Activated CD4-positive, alpha-beta T cell treated with anti-CD3 and anti-CD28 coated beads, Interleukin-2, amount 10 ng/mL, durations not matched to agents 24 days and 14 days (primary cell): ENCODE measurements at regions of chr14 and their contacts with region 1.

Region 1: DNA sequence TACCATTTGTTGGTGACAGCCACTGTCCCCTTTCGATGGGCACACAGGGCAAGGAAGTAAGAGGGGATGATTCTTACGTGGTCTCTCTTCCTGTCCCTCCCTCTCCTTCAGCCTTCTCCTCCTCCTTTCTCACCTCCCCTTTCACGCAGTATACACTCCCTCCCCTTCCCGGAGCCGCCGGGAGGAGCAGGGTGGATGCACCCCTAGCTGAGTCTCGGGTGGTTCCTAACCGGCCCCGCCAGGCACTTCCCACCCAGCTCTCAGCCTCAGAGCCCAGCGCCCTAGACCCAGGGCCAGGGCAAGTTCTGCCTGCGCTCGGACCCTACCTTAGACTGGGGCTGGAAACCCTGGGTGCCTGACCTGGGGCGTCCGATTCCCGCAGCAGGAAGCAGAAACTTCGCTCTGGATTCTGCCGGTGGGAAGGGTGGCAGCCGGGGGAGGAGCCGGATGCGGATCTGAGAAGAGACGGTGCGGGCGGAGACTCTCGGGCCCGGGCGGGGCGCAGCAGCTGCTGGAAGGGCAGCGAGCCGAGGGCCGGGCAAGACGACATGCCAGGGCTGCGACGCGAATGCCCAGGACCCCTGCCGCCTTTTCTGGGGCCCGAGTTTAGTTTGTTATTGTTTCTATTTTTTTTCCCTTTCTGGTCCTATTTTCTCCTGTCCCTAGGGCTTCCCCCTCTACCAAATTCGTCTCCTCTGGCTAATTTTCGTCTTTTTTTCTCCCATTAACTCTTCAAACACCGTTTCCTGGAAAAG is at the start of gene TEP1:
- DNase-seq: peak; percentile 93
- H3K4me3 Mint-ChIP-seq: peak within 1 kb of the TSS; percentile 97
- H3K27ac Mint-ChIP-seq: peak within 1 kb of the TSS; percentile 96
- H3K4me1 Mint-ChIP-seq: peaks cover 43% of the 10 kb centered on the region
- H3K27me3 Mint-ChIP-seq: no peaks in the 10 kb centered on the region
- total RNA-seq, gene TEP1: 34.6 and 35.8 TPM in 2 replicates

Region 2: GRCh38 chr14:20327005-20327869 is 86.0 kb before region 1 on chr14:
- intact Hi-C with region 1: loop called (anchors 1 kb)
- DNase-seq: peak; percentile 83
- H3K4me3 Mint-ChIP-seq: peak overlapping the region; percentile 56
- H3K27ac Mint-ChIP-seq: peak overlapping the region; percentile 31
- H3K4me1 Mint-ChIP-seq: peaks cover 31% of the 10 kb centered on the region
- H3K27me3 Mint-ChIP-seq: no peaks in the 10 kb centered on the region

Region 3: DNA sequence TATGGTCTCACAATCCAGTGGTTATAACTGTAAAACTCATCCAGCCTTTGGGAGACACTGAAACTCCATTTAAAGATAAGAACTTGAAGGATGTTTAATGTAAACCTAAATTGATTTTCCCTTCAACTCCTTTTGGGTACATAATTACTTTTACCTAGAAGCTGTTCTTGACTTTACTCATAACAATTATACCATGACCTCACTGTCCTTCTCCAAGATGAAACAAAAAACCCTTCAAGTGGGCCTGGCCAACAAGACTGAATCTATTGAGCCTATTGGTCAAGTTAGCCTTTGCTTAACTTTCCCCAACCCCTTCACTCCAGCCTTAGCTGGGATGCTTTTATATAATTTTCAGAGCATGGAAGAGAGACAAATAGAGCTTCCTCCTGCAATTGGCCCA is 47.3 kb before region 1 on chr14:
- intact Hi-C with region 1: loop called (anchors 2 kb)
- DNase-seq: no peak
- H3K4me3 Mint-ChIP-seq: no peak overlapping the region
- H3K27ac Mint-ChIP-seq: no peak overlapping the region
- H3K4me1 Mint-ChIP-seq: peaks cover 5% of the 10 kb centered on the region
- H3K27me3 Mint-ChIP-seq: no peaks in the 10 kb centered on the region

Region 4: DNA sequence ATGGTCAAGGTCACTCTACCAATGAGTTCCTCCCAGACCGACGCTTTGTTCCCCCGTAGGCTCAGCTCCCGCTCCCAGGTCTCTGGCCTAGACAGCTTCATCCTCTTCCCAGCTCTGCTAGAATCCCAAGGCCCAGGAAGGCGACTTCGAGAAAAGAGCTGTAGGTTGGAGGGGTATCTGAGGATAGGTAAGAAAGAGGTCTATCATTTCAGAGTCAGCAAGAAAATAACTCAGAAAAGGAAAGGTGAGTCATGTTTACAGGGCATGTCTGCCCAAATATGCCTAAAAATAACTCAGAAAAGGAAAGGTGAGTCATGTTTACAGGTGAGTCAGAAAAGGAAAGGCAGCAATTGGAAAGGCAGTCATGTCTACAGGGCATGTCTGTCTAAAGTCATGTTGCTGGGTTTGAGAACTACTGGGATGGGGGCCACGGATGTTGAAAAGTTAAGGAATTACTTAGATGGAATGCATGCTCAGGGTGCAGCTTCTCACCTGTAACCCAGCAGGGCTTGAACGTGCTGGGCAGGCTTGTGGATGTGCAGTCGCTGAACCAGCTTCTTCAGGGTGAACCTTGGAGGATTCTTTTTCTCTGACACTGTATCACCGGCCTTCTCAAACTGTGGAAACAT is 12.1 kb before region 1 on chr14:
- intact Hi-C with region 1: loop called (anchors 1 kb)
- DNase-seq: no peak
- H3K4me3 Mint-ChIP-seq: peak overlapping the region; percentile 68
- H3K27ac Mint-ChIP-seq: peak overlapping the region; percentile 96
- H3K4me1 Mint-ChIP-seq: peaks cover 25% of the 10 kb centered on the region
- H3K27me3 Mint-ChIP-seq: no peaks in the 10 kb centered on the region

Region 5: GRCh38 chr14:20427231-20428009 is 14.2 kb after region 1 on chr14:
- intact Hi-C with region 1: loop called (anchors 2 kb)
- DNase-seq: no peak
- H3K4me3 Mint-ChIP-seq: peak overlapping the region; percentile 52
- H3K27ac Mint-ChIP-seq: peak overlapping the region; percentile 80
- H3K4me1 Mint-ChIP-seq: peaks cover 22% of the 10 kb centered on the region
- H3K27me3 Mint-ChIP-seq: no peaks in the 10 kb centered on the region

Region 6: DNA sequence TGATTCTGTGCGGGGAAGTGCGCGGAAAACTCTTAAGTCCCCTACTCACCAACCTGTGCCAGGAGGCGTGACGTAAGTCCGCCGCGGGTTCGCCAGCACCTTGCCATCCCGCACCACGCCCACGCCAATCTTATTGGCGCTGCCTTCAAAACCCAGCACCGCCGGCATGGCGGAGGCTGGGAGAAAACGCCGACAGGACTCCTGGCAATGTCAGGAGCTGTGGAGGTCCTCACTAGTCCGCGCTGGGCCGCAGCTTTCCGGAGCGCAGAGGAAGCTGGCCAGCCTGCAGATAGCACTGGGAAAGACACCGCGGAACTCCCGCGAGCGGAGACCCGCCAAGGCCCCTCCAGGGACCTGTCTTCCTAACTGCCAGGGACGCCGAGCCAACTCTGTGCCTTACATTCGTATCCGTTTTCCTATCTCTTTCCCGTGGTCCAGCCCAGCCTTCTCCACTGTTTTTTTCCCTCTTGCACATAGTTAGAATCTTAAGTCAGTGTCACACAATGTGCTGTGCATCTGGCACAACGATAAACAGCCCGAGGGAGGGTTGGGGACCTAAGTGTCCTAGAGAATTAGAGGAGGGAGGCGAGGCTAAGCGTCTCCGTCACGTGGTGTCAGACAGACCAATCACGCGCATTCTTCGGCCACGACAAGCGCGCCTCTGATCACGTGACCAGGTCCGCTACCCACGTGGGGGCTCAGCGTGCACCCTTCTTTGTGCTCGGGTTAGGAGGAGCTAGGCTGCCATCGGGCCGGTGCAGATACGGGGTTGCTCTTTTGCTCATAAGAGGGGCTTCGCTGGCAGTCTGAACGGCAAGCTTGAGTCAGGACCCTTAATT is 41.5 kb after region 1 on chr14 and contains the starts of genes APEX1 and OSGEP:
- intact Hi-C with region 1: loop called (anchors 1 kb)
- DNase-seq: peak; percentile 99
- H3K4me3 Mint-ChIP-seq: peak within 1 kb of the TSS; percentile 59
- H3K27ac Mint-ChIP-seq: no peak within 1 kb of the TSS
- H3K4me1 Mint-ChIP-seq: peaks cover 20% of the 10 kb centered on the region
- H3K27me3 Mint-ChIP-seq: no peaks in the 10 kb centered on the region
- total RNA-seq, gene APEX1: 239 and 242 TPM in 2 replicates
- total RNA-seq, gene OSGEP: 69.8 and 76.9 TPM in 2 replicates

Region 7: DNA sequence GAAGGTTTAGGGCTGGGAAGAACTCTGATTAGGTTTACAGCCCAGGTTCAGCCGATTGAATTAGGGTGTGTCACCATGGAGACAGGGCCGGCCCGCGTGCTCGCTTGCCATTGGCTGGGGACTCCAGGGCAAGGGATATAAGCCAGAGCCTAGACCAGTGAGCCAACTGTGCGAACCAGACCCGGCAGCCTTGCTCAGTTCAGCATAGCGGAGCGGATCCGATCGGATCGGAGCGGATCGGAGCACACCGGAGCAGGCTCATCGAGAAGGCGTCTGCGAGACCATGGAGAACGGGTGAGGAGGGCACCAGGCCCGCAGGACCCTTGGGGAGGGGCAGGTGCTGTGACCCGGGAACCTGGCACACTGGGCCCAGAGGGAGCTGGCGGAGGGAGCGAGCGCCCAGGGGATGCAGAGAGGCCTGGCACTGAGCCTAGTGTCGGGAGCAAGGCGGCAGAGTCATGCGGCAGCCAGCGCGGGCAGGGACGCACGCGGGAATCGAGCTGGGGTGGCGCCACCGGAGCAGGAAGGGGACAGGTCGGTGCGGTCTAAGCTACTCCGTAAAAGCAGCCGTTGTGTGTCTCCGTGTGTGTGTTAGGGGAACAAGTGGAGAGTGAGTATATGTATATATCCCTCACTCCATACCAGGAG is 56.1 kb after region 1 on chr14 and contains the start of gene PNP:
- intact Hi-C with region 1: no loop called
- DNase-seq: peak; percentile 96
- H3K4me3 Mint-ChIP-seq: peak within 1 kb of the TSS; percentile 95
- H3K27ac Mint-ChIP-seq: peak within 1 kb of the TSS; percentile 100
- H3K4me1 Mint-ChIP-seq: peaks cover 36% of the 10 kb centered on the region
- H3K27me3 Mint-ChIP-seq: peaks cover 2% of the 10 kb centered on the region
- total RNA-seq, gene PNP: 155 and 158 TPM in 2 replicates